T-cell (primary cell): ENCODE measurements at regions of chr17 and their contacts with region 1.

Region 1: DNA sequence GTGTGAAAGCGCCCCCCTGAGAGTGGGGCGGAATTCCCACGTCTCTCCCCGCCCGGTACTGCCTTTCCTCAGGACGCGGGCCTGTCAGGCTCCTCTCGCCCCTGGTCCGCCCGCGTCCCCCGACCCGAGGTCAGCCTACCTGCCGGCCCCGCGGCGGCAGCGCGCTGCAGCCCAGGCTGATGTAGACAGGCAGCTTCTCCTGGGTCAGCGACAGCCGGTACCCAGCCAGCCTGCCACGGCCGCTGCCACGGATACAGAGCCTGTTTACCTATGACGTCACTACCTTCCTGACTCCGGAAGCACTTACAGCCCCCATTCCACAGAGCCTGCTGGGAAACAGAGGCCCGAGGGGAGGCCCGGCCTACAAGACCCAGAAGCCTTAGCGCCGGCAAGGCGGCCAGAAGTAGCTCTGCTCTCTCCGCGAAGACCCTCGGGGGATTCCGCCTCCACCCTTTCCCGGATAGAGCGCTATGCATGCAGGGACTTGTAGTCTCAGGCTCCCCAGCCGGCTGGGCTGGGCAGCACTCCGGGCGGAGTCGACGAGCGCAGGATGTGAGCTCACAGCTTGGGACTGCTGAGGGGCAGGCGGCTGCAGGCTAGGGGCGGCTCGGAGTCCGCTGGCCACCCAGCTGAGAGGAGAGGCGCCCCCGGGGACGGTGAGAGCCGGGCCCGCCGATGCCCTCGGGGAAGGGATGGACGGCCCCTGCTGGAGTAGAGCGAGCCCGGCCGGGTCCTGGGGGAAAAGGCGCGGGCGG is at the starts of genes IFT20 and TNFAIP1:
- DNase-seq: peak; percentile 88 to 99 (median 98)
- ATAC-seq: peak; percentile 95 to 99 (median 98)
- H3K4me3 ChIP-seq: peak within 1 kb of the TSS; percentile 81 to 88
- H3K4me3 Mint-ChIP-seq: peak within 1 kb of the TSS; percentile 95 to 98 (median 96)
- H3K27ac ChIP-seq: peak within 1 kb of the TSS; percentile 77
- H3K27ac Mint-ChIP-seq: peak within 1 kb of the TSS; percentile 87 to 90
- H3K4me1 ChIP-seq: peaks cover 12 to 28% of the 10 kb centered on the region in 2 experiments
- H3K4me1 Mint-ChIP-seq: peaks cover 49 to 54% (median 50%) of the 10 kb centered on the region in 3 donors
- H3K27me3 ChIP-seq: no peaks in the 10 kb centered on the region
- H3K27me3 Mint-ChIP-seq: no peaks in the 10 kb centered on the region
- total RNA-seq, gene IFT20: 29.3 to 55.4 (median 33.8) TPM
- total RNA-seq, gene TNFAIP1: 12.1 to 28.9 (median 23.3) TPM

Region 2: GRCh38 chr17:28252436-28252835 is 82.9 kb before region 1 on chr17:
- CTCF ChIA-PET with region 1: no interaction called
- POLR2A ChIA-PET with region 1: no interaction called
- DNase-seq: no peak
- ATAC-seq: no peak
- H3K4me3 ChIP-seq: no peak overlapping the region
- H3K4me3 Mint-ChIP-seq: peak overlapping the region in 1 of 3 donors; percentile 79
- H3K27ac ChIP-seq: no peak overlapping the region
- H3K27ac Mint-ChIP-seq: no peak overlapping the region
- H3K4me1 ChIP-seq: peaks cover 2 to 13% of the 10 kb centered on the region in 2 experiments
- H3K4me1 Mint-ChIP-seq: peaks cover 5 to 14% (median 8%) of the 10 kb centered on the region in 3 donors
- H3K27me3 ChIP-seq: peaks cover 2 to 66% of the 10 kb centered on the region in 2 experiments
- H3K27me3 Mint-ChIP-seq: peaks cover 14 to 19% of the 10 kb centered on the region in 2 donors

Region 3: GRCh38 chr17:28272166-28272565 is 63.2 kb before region 1 on chr17:
- CTCF ChIA-PET with region 1: no interaction called
- POLR2A ChIA-PET with region 1: no interaction called
- DNase-seq: no peak
- ATAC-seq: no peak
- H3K4me3 ChIP-seq: no peak overlapping the region
- H3K4me3 Mint-ChIP-seq: no peak overlapping the region
- H3K27ac ChIP-seq: no peak overlapping the region
- H3K27ac Mint-ChIP-seq: no peak overlapping the region
- H3K4me1 ChIP-seq: no peaks in the 10 kb centered on the region
- H3K4me1 Mint-ChIP-seq: peaks cover under 1 to 11% (median 4%) of the 10 kb centered on the region in 3 donors
- H3K27me3 ChIP-seq: peaks cover 3 to 52% of the 10 kb centered on the region in 2 experiments
- H3K27me3 Mint-ChIP-seq: peaks cover 43 to 44% of the 10 kb centered on the region in 2 donors

Region 4: DNA sequence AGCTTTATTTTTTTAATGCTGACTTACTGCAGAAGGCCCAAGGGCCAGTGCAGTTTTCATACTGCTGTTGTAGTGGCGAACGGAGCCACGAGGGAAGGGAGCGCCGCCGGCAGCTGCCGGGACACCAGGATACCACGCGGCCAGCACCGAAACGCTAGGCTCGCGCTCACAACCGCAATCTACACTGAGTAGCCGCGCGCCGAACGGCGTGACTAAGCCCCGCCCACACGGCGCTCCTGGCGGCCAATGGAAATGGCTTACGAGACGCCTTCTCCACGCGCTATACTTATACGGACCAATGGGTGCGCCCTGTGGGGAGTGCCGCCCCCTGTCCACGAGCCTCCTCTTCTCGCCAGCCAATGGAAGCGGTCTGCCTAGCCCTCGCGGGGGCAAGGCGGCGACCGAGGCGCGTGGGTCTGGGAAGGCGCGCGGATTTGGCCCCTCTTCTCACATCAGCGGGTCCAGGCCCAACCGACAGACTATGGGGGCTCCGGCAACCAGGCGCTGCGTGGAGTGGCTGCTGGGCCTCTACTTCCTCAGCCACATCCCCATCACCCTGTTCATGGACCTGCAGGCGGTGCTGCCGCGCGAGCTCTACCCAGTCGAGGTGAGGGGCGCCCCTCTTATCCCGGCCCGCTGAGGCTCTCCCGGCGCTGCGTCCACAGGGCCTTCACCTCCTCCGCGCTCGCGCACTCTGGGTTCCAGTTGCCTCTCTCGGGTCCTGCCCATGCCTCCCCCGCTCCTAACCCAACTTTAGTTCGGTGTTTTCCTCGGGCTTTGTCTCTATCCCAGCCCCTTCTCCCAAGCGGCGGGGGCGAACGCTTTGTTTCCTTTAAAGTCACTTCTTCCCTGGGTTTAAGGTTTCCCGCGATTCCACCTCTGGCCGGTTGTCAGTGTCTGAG is 16.4 kb before region 1 on chr17 and contains the start of gene TMEM97:
- CTCF ChIA-PET with region 1: interaction called, 3 to 15 read pairs
- POLR2A ChIA-PET with region 1: interaction called, 5 to 11 read pairs
- DNase-seq: peak; percentile 83 to 97 (median 93)
- ATAC-seq: peak; percentile 98 to 99 (median 99)
- H3K4me3 ChIP-seq: peak within 1 kb of the TSS; percentile 76 to 78
- H3K4me3 Mint-ChIP-seq: peak within 1 kb of the TSS; percentile 79 to 89 (median 88)
- H3K27ac ChIP-seq: no peak within 1 kb of the TSS
- H3K27ac Mint-ChIP-seq: peak within 1 kb of the TSS in 1 of 2 donors; percentile 61
- H3K4me1 ChIP-seq: peaks cover 4 to 19% of the 10 kb centered on the region in 2 experiments
- H3K4me1 Mint-ChIP-seq: peaks cover 21 to 31% (median 28%) of the 10 kb centered on the region in 3 donors
- H3K27me3 ChIP-seq: peaks cover 0 to 4% of the 10 kb centered on the region in 2 experiments
- H3K27me3 Mint-ChIP-seq: peaks cover 0 to 4% of the 10 kb centered on the region in 2 donors
- total RNA-seq, gene TMEM97: 3.4 to 7.2 (median 5.1) TPM

Region 5: GRCh38 chr17:28357061-28357900 is 21.9 kb after region 1 on chr17 and contains the start of gene POLDIP2:
- CTCF ChIA-PET with region 1: interaction called in 1 of 2 experiments, 15 read pairs
- POLR2A ChIA-PET with region 1: interaction called, 11 to 25 read pairs
- DNase-seq: peak; percentile 87 to 97 (median 94)
- ATAC-seq: peak; percentile 97 to 100 (median 99)
- H3K4me3 ChIP-seq: peak within 1 kb of the TSS; percentile 82 to 90
- H3K4me3 Mint-ChIP-seq: peak within 1 kb of the TSS; percentile 93 to 95 (median 94)
- H3K27ac ChIP-seq: peak within 1 kb of the TSS; percentile 72
- H3K27ac Mint-ChIP-seq: peak within 1 kb of the TSS; percentile 92 to 93
- H3K4me1 ChIP-seq: peaks cover 11 to 20% of the 10 kb centered on the region in 2 experiments
- H3K4me1 Mint-ChIP-seq: peaks cover 24 to 33% (median 33%) of the 10 kb centered on the region in 3 donors
- H3K27me3 ChIP-seq: no peaks in the 10 kb centered on the region
- H3K27me3 Mint-ChIP-seq: no peaks in the 10 kb centered on the region
- total RNA-seq, gene POLDIP2: 29.2 to 38.7 (median 33.2) TPM